G401 (cell line): ENCODE measurements at regions of chr2 and their contacts with region 1.

Region 1: GRCh38 chr2:226791487-226792081 is 8.0 kb downstream of the IRS1 start:
- DNase-seq: peak; percentile 88

Region 2: DNA sequence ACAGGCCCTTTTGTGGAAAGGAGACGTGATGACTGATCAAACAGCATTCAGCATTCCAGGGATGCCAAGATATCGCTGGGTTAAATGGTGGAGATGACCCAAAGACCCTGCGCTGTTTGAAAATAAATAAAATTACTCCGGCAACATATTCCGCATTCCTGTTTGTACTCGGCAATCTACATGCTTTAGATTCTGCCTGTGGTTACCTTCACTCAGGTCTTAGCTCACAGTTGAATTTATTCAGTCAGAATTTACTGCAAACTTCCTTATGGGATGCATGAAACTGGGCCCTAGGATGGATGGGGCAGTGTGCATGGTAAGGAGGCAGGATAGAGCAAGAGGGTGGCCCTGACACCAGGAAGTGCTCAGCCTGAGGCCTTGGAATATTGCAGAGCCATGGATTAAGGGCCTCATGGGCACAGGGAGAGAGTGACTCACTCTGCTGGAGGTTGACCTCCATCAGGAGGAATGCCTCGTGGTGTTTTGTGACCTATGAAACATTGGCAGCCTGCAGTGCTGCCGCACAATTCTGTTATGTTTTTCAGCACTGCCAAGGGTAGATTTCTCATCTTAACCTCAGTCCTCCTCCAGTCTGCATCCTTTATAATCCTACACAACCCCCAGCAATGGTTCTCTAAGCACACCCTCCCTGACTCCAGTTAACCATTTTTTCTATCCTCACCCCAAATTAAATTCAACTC is 313.3 kb before region 1 on chr2:
- in situ Hi-C with region 1: loop called (anchors 25 kb)
- DNase-seq: peak; percentile 74

Region 3: DNA sequence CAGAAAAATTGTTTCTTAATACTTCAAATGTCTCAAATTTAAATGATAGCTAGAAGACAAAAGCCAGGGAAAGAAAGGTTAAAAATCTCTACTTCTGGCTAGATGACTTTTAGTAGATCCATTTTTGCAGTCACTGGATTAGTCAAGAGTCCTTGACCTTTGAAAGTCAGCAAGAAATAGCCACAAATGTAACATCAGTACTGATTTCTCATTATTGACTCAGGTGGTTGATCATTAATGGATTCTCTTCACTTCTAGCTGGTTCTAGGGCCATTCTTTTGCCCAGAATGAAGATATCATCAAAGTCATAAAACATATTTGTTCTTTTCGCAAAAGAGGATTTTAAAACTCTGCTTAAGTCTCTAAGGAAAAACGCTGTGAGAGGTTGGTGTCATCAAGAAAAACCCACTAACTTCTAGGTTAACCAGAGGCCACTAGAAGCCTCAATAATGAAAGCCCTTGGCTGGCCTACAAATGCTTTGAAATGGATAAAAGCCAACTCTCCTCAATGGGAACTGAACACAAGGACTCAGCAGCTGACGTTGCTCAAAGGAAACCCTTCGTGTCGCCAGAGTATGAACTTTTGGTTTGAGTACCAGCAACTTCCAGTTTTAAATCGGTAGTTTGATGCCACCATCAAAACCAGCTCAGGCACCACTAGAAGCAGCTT is 58.3 kb before region 1 on chr2:
- in situ Hi-C with region 1: no loop called
- DNase-seq: peak; percentile 19

Region 4: GRCh38 chr2:226835796-226836547 is 44.4 kb after region 1 on chr2 and contains the start of gene RHBDD1:
- in situ Hi-C with region 1: no loop called
- DNase-seq: peak; percentile 94
- total RNA-seq, gene RHBDD1: 4.0 and 7.9 TPM in 2 replicates

Region 5: GRCh38 chr2:227082286-227082685 is 290.7 kb after region 1 on chr2:
- in situ Hi-C with region 1: no loop called
- DNase-seq: no peak